K562 (cell line): ENCODE measurements at regions of chr10 and their contacts with region 1.

Region 1: GRCh38 chr10:101840741-101841453 is 2.7 kb downstream of the KCNIP2 start:
- DNase-seq: peak; percentile 69 to 85 (median 76)
- ATAC-seq: peak; percentile 95
- H3K4me3 ChIP-seq: no peak overlapping the region
- H3K27ac ChIP-seq: no peak overlapping the region
- H3K4me1 ChIP-seq: peaks cover under 1 to 21% of the 10 kb centered on the region in 2 experiments; a peak in 4 of 5 replicates
- H3K27me3 ChIP-seq: no peaks in the 10 kb centered on the region
- CTCF ChIP-seq: peak; percentile 94 to 98 (median 95)
- EP300 ChIP-seq: no peak
- POLR2A ChIP-seq: no peak
- RAD21 ChIP-seq: peak; percentile 89 to 93

Region 2: GRCh38 chr10:102040305-102041050 is 199.6 kb after region 1 on chr10:
- CTCF ChIA-PET with region 1: interaction called, 5 read pairs
- POLR2A ChIA-PET with region 1: interaction called, 35 read pairs
- in situ Hi-C with region 1: loop called (anchors 5 kb)
- intact Hi-C with region 1: no loop called
- DNase-seq: peak in 3 of 4 experiments; percentile 2 to 4 (median 3)
- ATAC-seq: no peak
- H3K4me3 ChIP-seq: no peak overlapping the region
- H3K27ac ChIP-seq: no peak overlapping the region
- H3K4me1 ChIP-seq: no peaks in the 10 kb centered on the region; a peak in 3 of 5 replicates
- H3K27me3 ChIP-seq: no peaks in the 10 kb centered on the region
- CTCF ChIP-seq: no peak
- EP300 ChIP-seq: no peak
- POLR2A ChIP-seq: no peak
- RAD21 ChIP-seq: no peak

Region 3: GRCh38 chr10:102072673-102073527 is 232.0 kb after region 1 on chr10:
- CTCF ChIA-PET with region 1: interaction called, 29 read pairs
- POLR2A ChIA-PET with region 1: interaction called, 3 read pairs
- in situ Hi-C with region 1: loop called (anchors 5 kb)
- intact Hi-C with region 1: loop called (anchors 2 kb)
- DNase-seq: peak; percentile 67 to 79 (median 69)
- ATAC-seq: peak; percentile 93
- H3K4me3 ChIP-seq: no peak overlapping the region
- H3K27ac ChIP-seq: no peak overlapping the region
- H3K4me1 ChIP-seq: peaks cover 3 to 11% of the 10 kb centered on the region in 2 experiments; a peak in 3 of 5 replicates
- H3K27me3 ChIP-seq: no peaks in the 10 kb centered on the region
- CTCF ChIP-seq: peak; percentile 82 to 91 (median 86)
- EP300 ChIP-seq: no peak
- POLR2A ChIP-seq: no peak
- RAD21 ChIP-seq: peak; percentile 89 to 94

Region 4: GRCh38 chr10:102352066-102352715 is 511.3 kb after region 1 on chr10:
- CTCF ChIA-PET with region 1: no interaction called
- POLR2A ChIA-PET with region 1: no interaction called
- in situ Hi-C with region 1: loop called (anchors 25 kb)
- intact Hi-C with region 1: no loop called
- DNase-seq: peak; percentile 63 to 68 (median 65)
- ATAC-seq: peak; percentile 87
- H3K4me3 ChIP-seq: no peak overlapping the region
- H3K27ac ChIP-seq: no peak overlapping the region
- H3K4me1 ChIP-seq: no peaks in the 10 kb centered on the region
- H3K27me3 ChIP-seq: no peaks in the 10 kb centered on the region
- CTCF ChIP-seq: peak; percentile 72 to 84 (median 77)
- EP300 ChIP-seq: no peak
- POLR2A ChIP-seq: no peak
- RAD21 ChIP-seq: peak; percentile 38 to 68

Region 5: DNA sequence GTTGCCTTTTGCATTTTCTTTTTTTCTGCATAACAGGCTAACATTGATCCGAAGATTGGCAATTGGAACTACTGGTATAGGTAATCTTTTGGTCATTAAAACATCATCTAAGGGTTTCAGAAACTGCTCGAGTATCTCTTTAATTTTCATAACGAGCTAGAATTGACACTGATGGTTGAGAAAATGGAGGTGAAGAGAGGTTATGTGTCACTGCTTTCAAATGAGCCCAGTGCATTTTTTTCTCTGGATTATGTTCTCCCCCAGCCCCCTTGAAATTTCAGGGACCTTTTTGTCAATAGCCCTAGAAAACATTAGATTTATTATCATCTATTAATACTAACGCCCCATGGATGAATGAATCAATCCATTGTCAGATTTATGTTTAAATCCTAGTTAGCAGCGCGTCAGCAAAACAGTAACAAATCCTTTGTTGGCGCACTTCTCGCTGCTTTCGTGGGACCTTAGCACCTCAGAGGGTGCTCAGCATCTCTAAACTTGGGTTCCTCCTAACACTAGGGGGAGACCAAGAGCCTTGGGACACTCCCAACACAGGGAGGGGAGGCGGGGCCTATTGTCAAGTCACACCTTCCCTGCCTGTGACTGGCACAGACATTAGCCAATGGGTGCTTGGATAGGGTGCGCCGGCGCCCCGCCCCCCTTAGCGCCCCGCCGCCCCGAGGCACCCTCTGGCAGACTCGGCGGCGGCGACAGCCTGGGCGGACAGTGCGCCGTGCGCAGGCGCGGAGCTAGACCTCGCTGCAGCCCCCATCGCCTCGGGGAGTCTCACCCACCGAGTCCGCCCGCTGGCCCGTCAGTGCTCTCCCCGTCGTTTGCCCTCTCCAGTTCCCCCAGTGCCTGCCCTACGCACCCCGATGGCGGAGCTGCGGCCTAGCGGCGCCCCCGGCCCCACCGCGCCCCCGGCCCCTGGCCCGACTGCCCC is 662.7 kb after region 1 on chr10 and contains the start of gene SUFU:
- CTCF ChIA-PET with region 1: no interaction called
- POLR2A ChIA-PET with region 1: no interaction called
- in situ Hi-C with region 1: loop called (anchors 25 kb)
- intact Hi-C with region 1: no loop called
- DNase-seq: peak; percentile 94 to 98 (median 96)
- ATAC-seq: peak; percentile 87
- H3K4me3 ChIP-seq: peak within 1 kb of the TSS; percentile 86
- H3K27ac ChIP-seq: peak within 1 kb of the TSS; percentile 87
- H3K4me1 ChIP-seq: peaks cover 4 to 13% of the 10 kb centered on the region in 2 experiments; a peak in 4 of 5 replicates
- H3K27me3 ChIP-seq: no peaks in the 10 kb centered on the region
- CTCF ChIP-seq: peak; percentile 77 to 90 (median 84)
- EP300 ChIP-seq: no peak
- POLR2A ChIP-seq: no peak; the same call in 1 of the 2 replicates
- RAD21 ChIP-seq: peak; percentile 52 to 74
- polyA plus RNA-seq, gene SUFU: 0.59 to 0.78 TPM